A673 (cell line): ENCODE measurements at regions of chr2 and their contacts with region 1.

Region 1: GRCh38 chr2:209208211-209208610 is 215.6 kb upstream of the MAP2 start:
- DNase-seq: peak; percentile 40
- H3K4me3 ChIP-seq: peak overlapping the region; percentile 27
- H3K27ac ChIP-seq: no peak overlapping the region
- H3K4me1 ChIP-seq: no peaks in the 10 kb centered on the region
- H3K27me3 ChIP-seq: peaks cover 12% of the 10 kb centered on the region
- CTCF ChIP-seq: peak; percentile 81

Region 2: GRCh38 chr2:208399202-208399601 is 809.0 kb before region 1 on chr2:
- CTCF ChIA-PET with region 1: no interaction called
- POLR2A ChIA-PET with region 1: no interaction called
- intact Hi-C with region 1: loop called (anchors 5 kb)
- DNase-seq: no peak
- H3K4me3 ChIP-seq: no peak overlapping the region
- H3K27ac ChIP-seq: no peak overlapping the region
- H3K4me1 ChIP-seq: no peaks in the 10 kb centered on the region
- H3K27me3 ChIP-seq: peaks cover 57% of the 10 kb centered on the region
- CTCF ChIP-seq: no peak

Region 3: GRCh38 chr2:208466151-208466919 is 741.9 kb before region 1 on chr2:
- CTCF ChIA-PET with region 1: no interaction called
- POLR2A ChIA-PET with region 1: no interaction called
- intact Hi-C with region 1: loop called (anchors 1 kb)
- DNase-seq: peak; percentile 65
- H3K4me3 ChIP-seq: no peak overlapping the region
- H3K27ac ChIP-seq: no peak overlapping the region
- H3K4me1 ChIP-seq: no peaks in the 10 kb centered on the region
- H3K27me3 ChIP-seq: peaks cover 44% of the 10 kb centered on the region
- CTCF ChIP-seq: peak; percentile 65

Region 4: DNA sequence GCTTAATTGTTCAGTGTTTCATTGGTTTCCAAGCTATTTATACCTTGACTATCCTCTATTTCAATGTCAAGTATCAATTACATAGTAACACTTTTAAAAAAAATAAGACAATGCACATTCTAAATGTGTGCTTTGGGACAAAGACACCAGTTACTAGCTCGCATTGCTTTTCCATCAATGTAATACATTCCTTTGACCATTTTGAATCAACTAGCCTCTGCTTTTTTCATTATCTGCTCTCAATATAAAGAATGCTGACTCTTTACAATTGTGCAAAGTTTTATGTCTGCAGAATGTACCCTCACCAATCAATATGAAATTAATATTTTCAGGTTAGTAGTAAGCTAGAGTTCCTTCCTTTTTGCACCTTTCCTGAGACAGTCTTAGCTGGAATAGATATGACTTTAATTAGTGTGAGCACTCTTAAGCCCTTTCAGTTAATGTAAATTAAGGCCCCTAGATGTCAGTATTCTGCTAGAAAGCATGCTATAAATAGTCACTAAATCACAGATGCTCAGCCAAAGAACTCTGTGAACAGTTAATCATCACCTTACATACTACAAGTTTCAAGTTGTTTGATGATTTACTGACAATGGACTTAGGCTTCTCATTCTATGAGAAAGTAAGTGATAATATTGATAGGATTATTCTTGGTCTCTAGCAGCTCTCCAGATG is 388.1 kb before region 1 on chr2:
- CTCF ChIA-PET with region 1: no interaction called
- POLR2A ChIA-PET with region 1: no interaction called
- intact Hi-C with region 1: loop called (anchors 5 kb)
- DNase-seq: peak; percentile 33
- H3K4me3 ChIP-seq: no peak overlapping the region
- H3K27ac ChIP-seq: no peak overlapping the region
- H3K4me1 ChIP-seq: no peaks in the 10 kb centered on the region
- H3K27me3 ChIP-seq: peaks cover 13% of the 10 kb centered on the region
- CTCF ChIP-seq: peak; percentile 45; the same call in 1 of the 2 replicates